HepG2 (cell line): ENCODE measurements at regions of chr4 and their contacts with region 1.

Region 1: DNA sequence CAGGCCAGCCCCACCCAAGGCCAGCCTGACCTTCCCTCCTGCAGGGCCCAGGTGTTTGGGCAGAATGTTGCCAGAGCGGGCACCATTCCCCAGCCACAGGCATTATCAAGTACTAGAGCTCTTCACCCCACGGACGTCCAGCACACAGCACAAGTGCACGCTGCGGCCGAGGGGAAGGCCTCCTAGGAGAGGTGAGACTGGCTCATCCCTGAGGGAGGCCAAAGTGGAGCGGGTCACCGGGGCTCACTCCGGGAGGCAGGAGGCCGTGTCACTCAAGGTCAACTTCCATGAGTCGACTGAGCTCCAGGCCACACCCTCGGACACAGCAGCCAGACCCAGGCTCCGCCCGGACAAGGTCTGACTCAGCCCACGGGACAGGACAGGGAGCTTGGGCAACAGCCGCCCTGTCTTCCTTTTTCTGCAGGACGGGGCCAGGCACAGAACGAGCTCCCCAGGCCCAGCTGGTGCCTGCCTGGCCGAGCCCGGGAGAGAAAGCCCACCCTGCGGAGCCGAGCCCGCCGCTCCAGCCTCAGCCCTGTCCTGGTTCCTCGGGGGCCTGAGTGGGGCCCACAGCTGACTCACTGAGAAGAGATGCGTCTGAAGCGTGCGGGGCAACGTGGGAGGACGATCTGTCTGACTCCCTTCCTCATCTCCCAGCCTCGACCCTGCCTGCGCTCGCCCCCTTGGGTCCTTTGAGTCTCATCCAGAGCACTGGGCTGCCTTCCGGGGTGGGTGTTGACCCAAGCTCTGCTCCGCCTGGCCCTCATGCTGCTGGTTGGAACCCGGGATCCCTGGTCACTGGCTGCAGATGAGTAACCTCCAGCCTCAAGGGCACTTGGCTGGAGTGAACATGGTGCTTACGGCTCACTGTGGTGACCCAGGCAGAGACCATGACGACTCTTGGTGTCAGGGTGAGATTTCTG is 1.6 kb downstream of the SLC49A3 start:
- DNase-seq: peak; percentile 90
- ATAC-seq: peak; percentile 79
- H3K4me3 ChIP-seq: peak overlapping the region; percentile 56 to 71 (median 63)
- H3K27ac ChIP-seq: peak overlapping the region; percentile 62
- H3K4me1 ChIP-seq: peaks cover 79% of the 10 kb centered on the region
- H3K27me3 ChIP-seq: peaks cover 1 to 3% of the 10 kb centered on the region in 2 experiments; a peak in 1 of 5 replicates
- CTCF ChIP-seq: peak; percentile 19; the same call in 1 of the 2 replicates
- EP300 ChIP-seq: no peak
- POLR2A ChIP-seq: peak in 1 of 2 experiments; percentile 65; a peak in 2 of 4 replicates
- RAD21 ChIP-seq: no peak

Region 2: GRCh38 chr4:705278-706082 is 18.2 kb after region 1 on chr4 and contains the start of gene PCGF3:
- CTCF ChIA-PET with region 1: interaction called, 7 read pairs
- POLR2A ChIA-PET with region 1: interaction called, 15 read pairs
- in situ Hi-C with region 1: no loop called
- intact Hi-C with region 1: loop called (anchors 2 kb)
- DNase-seq: peak; percentile 83
- ATAC-seq: peak; percentile 89
- H3K4me3 ChIP-seq: peak within 1 kb of the TSS; percentile 89 to 93 (median 92)
- H3K27ac ChIP-seq: peak within 1 kb of the TSS; percentile 75
- H3K4me1 ChIP-seq: peaks cover 58% of the 10 kb centered on the region
- H3K27me3 ChIP-seq: peaks cover 3 to 12% of the 10 kb centered on the region in 2 experiments; a peak in 2 of 5 replicates
- CTCF ChIP-seq: peak; percentile 7; the same call in 1 of the 2 replicates
- EP300 ChIP-seq: no peak
- POLR2A ChIP-seq: peak in 1 of 2 experiments; percentile 34; a peak in 1 of 4 replicates
- RAD21 ChIP-seq: peak; percentile 19; the same call in 1 of the 2 replicates
- total RNA-seq, gene PCGF3: 24.2 and 28.6 TPM in 2 replicates

Region 3: GRCh38 chr4:721261-722168 is 34.2 kb after region 1 on chr4:
- CTCF ChIA-PET with region 1: no interaction called
- POLR2A ChIA-PET with region 1: no interaction called
- in situ Hi-C with region 1: no loop called
- intact Hi-C with region 1: loop called (anchors 5 kb)
- DNase-seq: no peak
- ATAC-seq: no peak
- H3K4me3 ChIP-seq: no peak overlapping the region
- H3K27ac ChIP-seq: no peak overlapping the region
- H3K4me1 ChIP-seq: peaks cover 17% of the 10 kb centered on the region
- H3K27me3 ChIP-seq: no peaks in the 10 kb centered on the region; a peak in 1 of 5 replicates
- CTCF ChIP-seq: no peak
- EP300 ChIP-seq: no peak
- POLR2A ChIP-seq: no peak
- RAD21 ChIP-seq: no peak

Region 4: DNA sequence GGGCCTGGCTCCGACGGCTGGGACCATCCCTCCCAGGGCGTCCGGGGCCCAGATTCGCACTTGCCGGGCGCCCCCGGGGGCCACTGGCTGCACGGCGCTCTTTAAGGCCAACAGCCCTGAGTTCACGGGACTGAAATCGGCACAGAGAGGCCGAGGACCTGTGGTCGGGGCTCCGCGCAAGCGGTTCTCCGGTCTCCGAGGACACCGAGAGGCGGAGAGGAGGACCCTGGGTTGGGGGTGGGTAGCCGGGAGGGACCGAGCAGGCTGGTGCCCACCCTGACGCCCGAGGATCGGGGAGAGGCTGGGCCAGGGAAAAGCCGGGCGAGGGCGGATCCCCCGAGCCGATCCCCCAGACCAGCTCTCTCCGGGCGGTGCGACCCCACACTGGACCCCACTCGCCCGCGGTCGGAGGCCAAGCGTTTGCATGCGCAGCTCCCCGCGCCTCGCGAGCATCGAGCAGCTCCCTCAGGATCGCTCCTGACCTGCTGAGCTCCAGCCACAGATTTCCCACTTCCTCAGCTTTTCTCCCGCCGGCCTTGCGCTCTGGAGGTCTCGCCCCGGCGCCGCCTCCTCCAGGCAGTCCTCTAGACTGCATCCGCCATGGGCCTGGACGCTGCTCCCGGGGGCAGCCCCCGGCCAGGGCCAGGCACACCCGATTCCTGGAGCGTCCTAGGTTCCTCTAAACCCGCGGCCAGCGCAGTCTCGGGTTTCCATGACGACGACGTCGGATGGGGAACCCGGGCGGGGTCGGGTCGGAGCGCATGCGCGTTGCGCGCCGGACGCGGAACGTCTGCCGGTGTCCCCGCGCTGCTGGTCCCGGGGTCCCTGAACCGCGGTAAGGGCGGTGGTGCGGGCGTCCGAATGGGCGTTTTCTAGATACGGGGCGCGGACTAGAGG is 1354.2 kb after region 1 on chr4:
- CTCF ChIA-PET with region 1: no interaction called
- POLR2A ChIA-PET with region 1: no interaction called
- in situ Hi-C with region 1: no loop called
- intact Hi-C with region 1: no loop called
- DNase-seq: peak; percentile 55
- ATAC-seq: peak; percentile 66
- H3K4me3 ChIP-seq: peak overlapping the region; percentile 65 to 80 (median 79)
- H3K27ac ChIP-seq: no peak overlapping the region
- H3K4me1 ChIP-seq: peaks cover 13% of the 10 kb centered on the region
- H3K27me3 ChIP-seq: peaks cover 6 to 24% of the 10 kb centered on the region in 2 experiments
- CTCF ChIP-seq: no peak
- EP300 ChIP-seq: no peak
- POLR2A ChIP-seq: no peak
- RAD21 ChIP-seq: no peak